ENCODE measurements at regions of chrX and their contacts with region 1.

Region 1: DNA sequence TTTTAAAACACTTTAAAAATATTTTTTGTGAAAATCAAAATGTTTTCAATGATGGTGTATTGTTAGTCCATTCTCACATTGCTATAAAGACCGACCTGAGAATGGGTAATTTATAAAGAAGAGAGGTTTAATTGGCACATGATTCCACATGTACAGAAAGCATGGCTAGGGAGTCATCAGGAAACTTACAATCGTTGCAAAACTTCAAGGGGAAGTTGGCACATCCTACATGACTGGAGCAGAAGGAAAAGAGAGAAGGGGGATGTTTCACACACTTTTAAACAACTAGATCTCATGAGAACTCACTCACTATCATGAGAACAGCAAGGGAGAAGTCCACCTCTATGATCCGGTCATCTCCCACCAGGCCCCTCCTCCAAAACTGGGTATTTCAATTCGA is 110.7 kb downstream of the TMEM47 start:
- DNase-seq: peak; percentile 15
- H3K4me3 ChIP-seq: no peak overlapping the region
- H3K27ac ChIP-seq: no peak overlapping the region
- H3K4me1 ChIP-seq: no peaks in the 10 kb centered on the region
- H3K27me3 ChIP-seq: peaks cover 5% of the 10 kb centered on the region
- CTCF ChIP-seq: no peak

Region 2: DNA sequence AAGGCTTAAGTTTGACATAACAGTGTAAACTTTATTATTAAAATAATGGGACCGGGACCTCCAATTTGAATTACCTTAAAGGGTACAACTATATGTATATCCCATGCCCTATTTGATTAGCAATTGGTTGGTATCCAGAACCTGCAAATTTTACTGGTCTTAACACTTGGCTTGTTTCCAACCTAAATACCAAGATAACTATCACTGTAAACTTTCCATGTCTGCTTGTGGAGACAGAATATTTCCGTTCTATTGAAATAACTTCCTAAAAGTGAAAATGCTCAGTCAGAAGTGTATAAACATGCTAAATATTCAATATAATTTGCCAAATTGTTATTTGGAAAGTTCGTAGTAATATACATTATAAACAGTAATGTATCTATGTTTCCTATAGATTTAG is 43.2 kb before region 1 on chrX:
- CTCF ChIA-PET with region 1: no interaction called
- dilution Hi-C with region 1: no loop called
- in situ Hi-C with region 1: no loop called
- intact Hi-C with region 1: loop called (anchors 2 kb)
- DNase-seq: no peak
- H3K4me3 ChIP-seq: no peak overlapping the region
- H3K27ac ChIP-seq: no peak overlapping the region
- H3K4me1 ChIP-seq: no peaks in the 10 kb centered on the region
- H3K27me3 ChIP-seq: no peaks in the 10 kb centered on the region
- CTCF ChIP-seq: no peak